Breast epithelium (tissue), 4 donors: ENCODE measurements at regions of chr14 and their contacts with region 1.

Region 1: DNA sequence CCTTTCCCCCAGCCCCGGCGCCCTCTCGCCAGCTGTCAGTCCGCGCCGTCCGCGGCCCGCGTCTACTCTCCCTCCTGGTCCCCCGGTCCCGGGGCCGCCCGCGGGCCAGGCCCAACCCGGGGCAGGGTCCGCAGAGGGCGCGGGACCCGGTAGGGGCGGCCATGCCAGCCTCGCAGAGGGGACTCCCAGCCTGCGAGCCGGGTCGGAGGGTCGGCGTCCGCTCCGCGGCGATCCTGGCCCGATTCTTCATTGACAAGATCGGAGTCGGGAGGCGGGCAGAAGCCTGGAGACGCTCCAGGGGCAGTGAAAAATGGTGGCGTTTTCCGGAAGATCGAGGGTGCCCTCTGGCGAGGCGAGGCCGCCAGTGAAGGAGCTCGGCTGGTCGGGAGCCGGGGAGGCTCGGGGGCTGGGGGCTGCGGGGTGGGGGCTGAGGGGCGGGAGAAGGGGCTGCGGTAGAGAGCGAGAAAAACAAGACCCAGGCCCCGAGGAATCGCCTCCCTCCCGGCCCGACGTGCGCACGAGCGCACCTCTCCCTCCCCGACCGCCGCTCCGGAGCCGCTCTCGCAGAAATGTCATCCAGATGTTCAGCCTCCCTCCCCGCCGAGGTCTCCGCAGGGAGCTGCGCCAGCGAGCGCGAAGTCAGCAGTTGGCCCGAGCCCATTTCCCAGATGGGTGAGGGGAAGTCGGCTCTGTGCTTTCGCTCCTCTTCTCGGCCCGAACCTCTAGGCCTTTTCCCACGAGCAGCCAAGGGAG is 647 bp upstream of the TGFB3 start:
- DNase-seq: peak; percentile 80 to 87
- H3K4me3 ChIP-seq: peak overlapping the region; percentile 73 to 90 (median 79)
- H3K27ac ChIP-seq: peak overlapping the region; percentile 97
- H3K4me1 ChIP-seq: peaks cover 5 to 13% of the 10 kb centered on the region in 2 donors
- H3K27me3 ChIP-seq: no peaks in the 10 kb centered on the region
- CTCF ChIP-seq: peak in 2 of 3 donors; percentile 34 to 43
- POLR2A ChIP-seq: no peak

Region 2: DNA sequence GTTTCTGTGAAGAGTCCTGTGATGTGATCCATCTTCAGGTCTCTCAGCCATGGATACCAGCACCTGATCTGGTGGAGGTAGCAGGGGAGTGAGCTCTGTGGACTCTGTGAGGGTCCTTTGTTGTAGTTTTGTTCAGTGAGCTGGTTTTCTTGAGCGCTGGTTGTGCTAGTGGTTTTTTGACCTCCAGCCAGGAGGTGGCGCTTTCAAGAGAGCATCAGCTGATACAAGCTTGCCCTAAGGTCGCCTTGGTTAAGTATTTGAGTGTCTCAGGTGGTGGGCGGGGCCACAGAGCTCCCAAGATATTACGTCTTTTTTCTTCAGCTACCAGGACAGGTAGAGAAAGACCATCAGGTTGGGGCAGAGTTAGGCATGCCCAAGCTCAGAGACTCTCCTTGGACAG is 181.7 kb before region 1 on chr14:
- intact Hi-C with region 1: loop called (anchors 10 kb)
- DNase-seq: no peak
- H3K4me3 ChIP-seq: no peak overlapping the region
- H3K27ac ChIP-seq: no peak overlapping the region
- H3K4me1 ChIP-seq: no peaks in the 10 kb centered on the region
- H3K27me3 ChIP-seq: no peaks in the 10 kb centered on the region
- CTCF ChIP-seq: no peak
- POLR2A ChIP-seq: no peak

Region 3: GRCh38 chr14:75906676-75907280 is 75.7 kb before region 1 on chr14:
- intact Hi-C with region 1: loop called (anchors 5 kb)
- DNase-seq: peak in 1 of 2 donors; percentile 27
- H3K4me3 ChIP-seq: no peak overlapping the region
- H3K27ac ChIP-seq: peak overlapping the region in 1 of 2 donors; percentile 5
- H3K4me1 ChIP-seq: peaks cover 0 to 11% of the 10 kb centered on the region in 2 donors
- H3K27me3 ChIP-seq: no peaks in the 10 kb centered on the region
- CTCF ChIP-seq: peak; percentile 78 to 90 (median 81)
- POLR2A ChIP-seq: no peak

Region 4: GRCh38 chr14:76910371-76910890 is 928.0 kb after region 1 on chr14:
- intact Hi-C with region 1: loop called (anchors 5 kb)
- DNase-seq: no peak
- H3K4me3 ChIP-seq: no peak overlapping the region
- H3K27ac ChIP-seq: no peak overlapping the region
- H3K4me1 ChIP-seq: peaks cover 0 to 6% of the 10 kb centered on the region in 2 donors
- H3K27me3 ChIP-seq: no peaks in the 10 kb centered on the region
- CTCF ChIP-seq: no peak
- POLR2A ChIP-seq: no peak